ENCODE measurements at regions of chr6 and their contacts with region 1.

Region 1: DNA sequence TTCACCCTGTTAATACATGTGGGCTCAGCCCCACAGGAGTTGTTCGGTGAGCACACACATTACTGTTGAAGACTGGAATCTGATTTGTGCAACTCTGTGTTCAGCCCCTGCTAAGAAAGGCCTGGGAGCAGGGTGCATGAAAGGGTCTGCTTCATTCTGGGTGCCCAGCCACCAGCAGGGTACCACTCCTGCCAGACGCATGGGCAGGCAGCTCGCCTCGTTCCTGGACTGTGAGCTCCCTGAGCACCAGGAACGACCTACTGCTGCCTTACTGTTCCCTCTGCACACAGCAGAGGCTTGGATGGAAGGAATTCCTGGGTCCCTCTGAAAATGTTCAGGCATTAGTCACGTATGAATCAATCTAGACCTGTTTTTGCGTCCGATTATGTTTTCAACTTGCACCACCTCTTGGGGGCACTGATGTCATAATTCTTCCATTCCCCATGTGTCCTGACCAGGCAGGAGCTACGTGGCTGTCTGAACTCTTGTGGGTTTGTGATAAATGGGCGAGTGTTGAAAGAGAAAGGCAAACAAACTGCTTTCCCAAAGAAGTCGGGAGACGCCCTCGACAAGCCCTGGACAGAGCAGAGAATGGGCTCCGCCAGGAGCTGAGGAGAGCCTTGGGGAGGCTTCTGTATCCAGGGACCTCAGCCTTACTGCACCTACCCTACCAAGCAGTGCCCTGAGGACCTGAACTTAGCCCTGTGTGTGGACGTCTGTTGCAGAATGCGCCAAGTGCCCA is 123.9 kb downstream of the LY86 start:
- DNase-seq: peak; percentile 68 to 92 (median 82)
- ATAC-seq: peak; percentile 92
- H3K4me3 ChIP-seq: no peak overlapping the region
- H3K27ac ChIP-seq: peak overlapping the region; percentile 23
- H3K4me1 ChIP-seq: peaks cover 28 to 49% of the 10 kb centered on the region in 2 experiments
- H3K27me3 ChIP-seq: no peaks in the 10 kb centered on the region
- CTCF ChIP-seq: peak; percentile 47 to 71 (median 61)
- EP300 ChIP-seq: peak; percentile 89
- POLR2A ChIP-seq: no peak
- RAD21 ChIP-seq: peak; percentile 80 to 82

Region 2: DNA sequence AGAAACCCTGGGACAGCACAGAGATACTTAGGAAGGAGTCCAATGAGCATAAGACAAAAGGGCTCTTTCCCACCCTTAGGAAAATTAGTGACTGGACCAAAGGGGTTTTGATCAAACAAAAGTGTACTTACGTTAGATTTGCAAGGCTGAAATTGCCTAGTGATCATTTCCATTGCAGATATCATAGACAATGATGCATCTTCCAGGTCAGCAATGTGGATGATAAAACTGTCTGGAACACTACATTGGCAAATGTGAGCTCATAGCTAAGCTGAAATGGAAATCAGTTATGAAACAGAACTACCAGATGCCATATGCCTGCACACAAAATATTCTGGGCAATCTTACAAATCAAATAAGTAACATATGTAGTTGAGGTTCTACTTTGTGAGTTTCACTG is 89.9 kb before region 1 on chr6:
- CTCF ChIA-PET with region 1: no interaction called
- POLR2A ChIA-PET with region 1: no interaction called
- in situ Hi-C with region 1: no loop called
- intact Hi-C with region 1: no loop called
- DNase-seq: no peak
- ATAC-seq: no peak
- H3K4me3 ChIP-seq: no peak overlapping the region
- H3K27ac ChIP-seq: no peak overlapping the region
- H3K4me1 ChIP-seq: no peaks in the 10 kb centered on the region
- H3K27me3 ChIP-seq: peaks cover 27 to 51% of the 10 kb centered on the region in 2 experiments
- CTCF ChIP-seq: no peak
- EP300 ChIP-seq: no peak
- POLR2A ChIP-seq: no peak
- RAD21 ChIP-seq: no peak

Region 3: GRCh38 chr6:6696867-6697531 is 15.4 kb before region 1 on chr6:
- CTCF ChIA-PET with region 1: no interaction called
- POLR2A ChIA-PET with region 1: interaction called, 13 read pairs
- in situ Hi-C with region 1: no loop called
- intact Hi-C with region 1: no loop called
- DNase-seq: peak; percentile 73 to 94 (median 78)
- ATAC-seq: peak; percentile 62
- H3K4me3 ChIP-seq: no peak overlapping the region
- H3K27ac ChIP-seq: no peak overlapping the region; the same call in 2 of the 3 replicates
- H3K4me1 ChIP-seq: peaks cover 42 to 64% of the 10 kb centered on the region in 2 experiments
- H3K27me3 ChIP-seq: no peaks in the 10 kb centered on the region; a peak in 1 of 5 replicates
- CTCF ChIP-seq: peak; percentile 90 to 99 (median 93)
- EP300 ChIP-seq: no peak
- POLR2A ChIP-seq: no peak
- RAD21 ChIP-seq: peak; percentile 79 to 83